ENCODE measurements at regions of chr2 and their contacts with region 1.

Region 1: DNA sequence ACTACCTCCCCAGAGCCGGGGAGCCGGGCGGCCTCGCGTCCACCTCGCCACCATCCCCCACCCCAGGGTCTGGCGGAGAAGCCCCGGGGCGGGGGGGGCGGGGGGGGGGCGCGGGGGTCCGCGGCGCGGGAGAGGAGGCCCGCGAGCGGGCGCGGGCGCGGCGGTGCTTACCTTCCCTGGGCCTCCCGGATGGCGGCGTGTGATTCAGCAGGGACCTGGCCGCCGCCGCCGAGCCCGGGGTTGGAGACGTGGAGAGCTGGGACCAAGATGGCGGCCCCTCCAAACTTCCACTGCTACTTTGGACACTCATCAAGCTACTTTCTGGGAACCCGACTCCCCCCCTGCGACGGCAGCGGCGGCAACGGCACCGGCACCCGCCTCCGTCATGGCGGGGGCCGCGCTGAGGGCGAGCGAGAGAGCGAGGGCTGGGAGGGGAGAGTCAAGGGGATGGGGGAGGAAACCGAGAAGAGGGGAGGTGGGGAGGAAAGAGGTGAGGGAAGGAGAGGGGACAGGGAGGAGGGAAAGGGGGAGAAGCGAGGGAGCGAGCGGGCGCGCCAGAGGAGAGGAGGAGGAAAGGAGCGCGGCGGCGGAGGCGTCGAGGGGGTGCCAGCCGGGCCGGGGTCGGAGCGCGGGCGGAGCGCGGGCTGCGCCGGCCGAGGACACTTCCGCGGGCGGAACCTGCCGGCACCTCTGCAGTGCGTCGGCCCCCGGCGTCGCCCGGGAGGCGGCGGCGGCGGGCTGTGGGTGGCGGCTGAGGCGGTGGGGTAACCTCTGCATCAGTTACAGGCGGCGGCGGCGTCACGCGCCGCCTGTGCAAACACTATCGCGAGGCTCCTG is at the start of gene TLK1:
- DNase-seq: peak; percentile 64
- H3K4me3 Mint-ChIP-seq: peak within 1 kb of the TSS; percentile 96
- H3K27ac Mint-ChIP-seq: peak within 1 kb of the TSS; percentile 98
- H3K4me1 Mint-ChIP-seq: peaks cover 71% of the 10 kb centered on the region
- H3K27me3 Mint-ChIP-seq: peaks cover 2% of the 10 kb centered on the region
- total RNA-seq, gene TLK1: 106 and 112 TPM in 2 replicates

Region 2: GRCh38 chr2:170928824-170929685 is 231.3 kb before region 1 on chr2 and contains the start of gene GORASP2:
- intact Hi-C with region 1: loop called (anchors 1 kb)
- DNase-seq: peak; percentile 97
- H3K4me3 Mint-ChIP-seq: peak within 1 kb of the TSS; percentile 92
- H3K27ac Mint-ChIP-seq: peak within 1 kb of the TSS; percentile 92
- H3K4me1 Mint-ChIP-seq: peaks cover 45% of the 10 kb centered on the region
- H3K27me3 Mint-ChIP-seq: peaks cover 2% of the 10 kb centered on the region
- total RNA-seq, gene GORASP2: 99.5 and 104 TPM in 2 replicates

Region 3: DNA sequence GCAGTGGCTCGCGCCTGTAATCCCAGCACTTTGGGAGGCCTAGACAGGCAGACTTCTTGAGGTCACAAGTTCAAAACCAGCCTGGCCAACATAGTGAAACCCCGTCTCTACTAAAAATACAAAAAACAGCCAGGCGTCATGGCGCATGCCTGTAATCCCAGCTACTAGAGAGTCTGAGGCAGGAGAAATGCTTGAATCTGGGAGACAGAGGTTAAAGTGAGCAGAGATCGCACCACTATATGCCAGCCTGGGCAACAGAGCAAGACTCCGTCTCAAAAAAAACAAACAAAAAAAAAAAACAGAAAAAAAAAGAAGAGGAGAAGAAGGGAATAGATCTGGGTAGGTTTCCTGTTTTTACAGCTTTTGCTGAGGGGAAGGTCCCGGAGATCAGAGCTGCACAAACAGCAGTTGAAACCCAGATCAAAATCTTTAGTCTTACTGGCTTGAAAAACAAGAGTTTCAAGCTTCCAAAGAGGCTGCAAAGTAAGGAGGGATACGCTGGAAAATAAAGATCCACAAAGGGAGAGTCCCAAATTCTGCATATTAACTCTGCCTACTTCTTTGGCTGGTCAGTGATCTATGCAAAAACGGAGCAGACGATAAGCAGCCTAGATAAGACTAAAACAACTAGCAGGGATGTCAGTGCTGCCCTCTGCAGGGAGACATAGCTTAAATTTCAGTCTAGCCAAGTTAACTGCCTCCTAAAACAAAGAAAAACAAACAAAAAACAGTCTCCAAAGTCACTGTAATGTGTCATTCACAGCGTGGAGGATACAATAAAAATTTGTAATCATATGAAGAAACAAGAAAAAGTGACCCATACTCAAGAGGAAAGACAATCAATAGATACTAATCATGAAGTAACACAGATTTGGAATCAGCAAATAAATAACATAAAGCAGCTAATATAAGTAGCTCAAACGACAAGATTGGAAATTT is 73.7 kb before region 1 on chr2:
- intact Hi-C with region 1: loop called (anchors 1 kb)
- DNase-seq: peak; percentile 23
- H3K4me3 Mint-ChIP-seq: peak overlapping the region; percentile 77
- H3K27ac Mint-ChIP-seq: peak overlapping the region; percentile 82
- H3K4me1 Mint-ChIP-seq: peaks cover 52% of the 10 kb centered on the region
- H3K27me3 Mint-ChIP-seq: no peaks in the 10 kb centered on the region

Region 4: DNA sequence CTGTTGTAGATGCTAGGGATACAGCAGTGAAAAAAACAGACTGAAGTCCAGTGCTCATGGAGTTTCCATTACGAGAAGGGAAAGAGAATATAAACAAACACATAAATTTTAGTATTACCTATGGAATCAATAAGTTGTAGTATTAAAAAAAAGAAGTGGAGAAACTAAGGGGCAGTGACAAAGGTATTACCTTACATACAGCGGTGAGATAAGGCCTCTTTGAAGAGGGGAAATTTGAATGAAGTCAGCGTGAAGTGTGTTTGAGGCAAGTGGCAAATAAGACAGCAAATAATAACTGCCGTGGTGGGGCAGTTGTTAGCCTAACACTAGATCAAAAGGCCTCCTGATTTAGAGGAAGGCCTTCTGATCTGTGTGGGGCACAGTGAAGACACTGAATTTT is 57.5 kb before region 1 on chr2:
- intact Hi-C with region 1: no loop called
- DNase-seq: no peak
- H3K4me3 Mint-ChIP-seq: no peak overlapping the region
- H3K27ac Mint-ChIP-seq: no peak overlapping the region
- H3K4me1 Mint-ChIP-seq: peaks cover 25% of the 10 kb centered on the region
- H3K27me3 Mint-ChIP-seq: no peaks in the 10 kb centered on the region

Region 5: DNA sequence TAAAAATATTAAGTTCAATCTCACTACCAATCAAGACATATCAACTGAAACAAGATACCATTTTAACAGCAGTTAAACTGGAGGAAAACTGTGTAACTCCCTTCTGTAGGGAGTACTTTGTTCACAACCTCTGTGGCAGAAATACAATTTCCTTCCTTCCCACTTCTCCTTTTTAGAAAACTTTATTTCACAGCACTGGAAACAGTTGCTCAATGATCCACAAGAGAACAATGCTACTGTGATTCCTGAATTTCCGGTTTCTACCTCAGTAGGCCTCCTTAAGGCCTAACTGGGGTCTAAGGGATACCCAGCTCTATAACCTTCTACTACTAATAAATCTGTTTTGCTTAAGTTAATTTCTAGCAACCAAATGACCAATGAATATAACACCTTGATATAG is 13.7 kb before region 1 on chr2:
- intact Hi-C with region 1: no loop called
- DNase-seq: no peak
- H3K4me3 Mint-ChIP-seq: no peak overlapping the region
- H3K27ac Mint-ChIP-seq: no peak overlapping the region
- H3K4me1 Mint-ChIP-seq: peaks cover 56% of the 10 kb centered on the region
- H3K27me3 Mint-ChIP-seq: no peaks in the 10 kb centered on the region

Region 6: GRCh38 chr2:171173089-171173488 is 12.8 kb after region 1 on chr2:
- intact Hi-C with region 1: loop called (anchors 1 kb)
- DNase-seq: no peak
- H3K4me3 Mint-ChIP-seq: no peak overlapping the region
- H3K27ac Mint-ChIP-seq: no peak overlapping the region
- H3K4me1 Mint-ChIP-seq: peaks cover 25% of the 10 kb centered on the region
- H3K27me3 Mint-ChIP-seq: peaks cover 6% of the 10 kb centered on the region

Region 7: DNA sequence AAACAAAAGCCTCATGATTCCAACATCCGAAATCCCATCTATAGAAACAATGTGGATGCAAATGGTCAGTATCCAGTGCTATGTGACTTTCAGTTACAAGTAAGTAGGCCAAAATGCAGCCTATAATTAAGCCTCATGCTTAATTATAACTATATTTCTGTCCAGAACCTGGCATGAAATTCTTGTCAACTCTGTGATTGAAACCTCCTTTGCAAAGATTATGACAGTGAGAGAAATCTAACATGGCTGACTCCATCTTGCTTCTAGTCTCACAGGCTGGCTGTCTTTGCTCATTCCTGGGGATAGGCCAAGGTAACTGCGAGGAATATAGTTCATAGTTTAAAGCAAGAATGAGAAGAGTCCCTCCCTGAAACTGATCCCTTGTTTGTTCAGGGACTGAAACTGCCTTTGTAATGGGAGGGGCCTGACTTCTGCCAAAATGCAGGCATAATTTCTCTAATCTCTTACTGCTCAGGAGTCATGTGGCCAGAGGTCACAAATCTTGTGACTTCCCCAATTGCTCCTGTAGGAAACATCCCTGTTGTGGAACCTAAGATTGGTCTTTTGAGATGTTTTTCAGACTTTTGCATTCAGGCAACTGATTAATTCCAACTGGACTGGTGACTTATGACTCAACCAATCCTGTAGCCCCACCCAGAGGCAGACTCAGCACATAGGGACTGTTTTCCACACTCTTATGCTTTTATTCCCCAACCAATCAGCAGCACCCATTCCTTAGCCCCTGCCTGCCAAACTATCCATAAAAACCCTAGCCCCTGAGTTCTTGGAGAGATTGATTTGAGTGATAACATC is 84.8 kb after region 1 on chr2:
- intact Hi-C with region 1: loop called (anchors 1 kb)
- DNase-seq: no peak
- H3K4me3 Mint-ChIP-seq: no peak overlapping the region
- H3K27ac Mint-ChIP-seq: no peak overlapping the region
- H3K4me1 Mint-ChIP-seq: peaks cover 47% of the 10 kb centered on the region
- H3K27me3 Mint-ChIP-seq: no peaks in the 10 kb centered on the region

Region 8: DNA sequence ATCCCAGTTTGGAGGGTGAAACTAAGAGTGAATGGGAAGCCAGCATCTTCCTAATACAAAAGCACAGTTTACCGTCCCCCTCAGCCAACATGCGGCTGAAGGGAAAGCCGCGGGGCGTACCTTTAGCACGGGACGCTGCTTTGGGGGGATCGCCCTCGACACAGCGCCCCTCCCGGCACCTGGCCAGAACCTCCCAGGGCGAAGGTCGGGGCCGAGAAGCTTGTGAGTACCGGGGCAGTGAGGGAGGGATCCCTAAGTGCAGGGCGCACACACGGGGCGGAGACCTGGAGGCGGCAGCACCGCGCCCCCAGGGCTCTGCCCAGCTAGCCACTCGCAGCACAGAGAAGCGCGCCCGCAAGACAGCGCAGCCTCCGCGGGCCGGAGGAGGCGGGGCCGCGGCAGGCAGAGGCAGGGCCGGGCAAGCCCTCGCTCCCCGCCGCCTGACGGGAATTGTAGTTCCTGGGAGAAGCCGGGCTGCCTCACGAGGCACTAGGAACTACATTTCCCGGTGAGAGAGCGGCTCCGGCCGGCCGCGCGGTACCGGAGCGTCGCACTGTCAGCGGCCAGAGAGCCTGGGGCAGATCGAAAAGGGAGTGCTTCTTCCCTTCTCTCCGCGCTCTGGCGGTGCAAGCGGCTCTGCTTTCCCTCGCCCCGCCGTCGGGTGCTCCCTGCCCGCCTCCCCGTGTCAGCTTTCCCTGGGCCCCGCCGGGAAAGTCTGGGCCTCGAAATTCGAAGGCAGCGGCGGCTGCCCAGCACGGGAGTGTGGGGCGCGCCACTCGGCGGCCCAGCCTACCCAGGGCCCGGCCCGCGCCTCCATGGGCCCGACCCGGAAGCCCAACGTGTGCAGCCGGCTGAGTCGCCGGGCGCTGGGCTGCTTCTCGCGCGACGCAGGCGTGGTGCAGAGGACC is 273.7 kb after region 1 on chr2 and contains the starts of genes DCAF17 and METTL8:
- intact Hi-C with region 1: loop called (anchors 1 kb)
- DNase-seq: peak; percentile 93
- H3K4me3 Mint-ChIP-seq: peak within 1 kb of the TSS; percentile 95
- H3K27ac Mint-ChIP-seq: peak within 1 kb of the TSS; percentile 98
- H3K4me1 Mint-ChIP-seq: peaks cover 28% of the 10 kb centered on the region
- H3K27me3 Mint-ChIP-seq: no peaks in the 10 kb centered on the region
- total RNA-seq, gene DCAF17: 23.9 and 24.9 TPM in 2 replicates
- total RNA-seq, gene METTL8: 31.8 and 36.4 TPM in 2 replicates

Measured in activated T-helper 1 cell treated with anti-CD3 and anti-CD28 coated beads, Interleukin-12 subunit alpha, Interleukin-12 subunit beta, Interleukin-2, Interleukin-4 antibody, amounts not matched to agents 30 ng/mL and 10 ng/mL and 1 ng/mL, durations not matched to agents 14 hours and 24 hours and 36 hours (primary cell).